ENCODE measurements at regions of chr5 and their contacts with region 1.

Region 1: DNA sequence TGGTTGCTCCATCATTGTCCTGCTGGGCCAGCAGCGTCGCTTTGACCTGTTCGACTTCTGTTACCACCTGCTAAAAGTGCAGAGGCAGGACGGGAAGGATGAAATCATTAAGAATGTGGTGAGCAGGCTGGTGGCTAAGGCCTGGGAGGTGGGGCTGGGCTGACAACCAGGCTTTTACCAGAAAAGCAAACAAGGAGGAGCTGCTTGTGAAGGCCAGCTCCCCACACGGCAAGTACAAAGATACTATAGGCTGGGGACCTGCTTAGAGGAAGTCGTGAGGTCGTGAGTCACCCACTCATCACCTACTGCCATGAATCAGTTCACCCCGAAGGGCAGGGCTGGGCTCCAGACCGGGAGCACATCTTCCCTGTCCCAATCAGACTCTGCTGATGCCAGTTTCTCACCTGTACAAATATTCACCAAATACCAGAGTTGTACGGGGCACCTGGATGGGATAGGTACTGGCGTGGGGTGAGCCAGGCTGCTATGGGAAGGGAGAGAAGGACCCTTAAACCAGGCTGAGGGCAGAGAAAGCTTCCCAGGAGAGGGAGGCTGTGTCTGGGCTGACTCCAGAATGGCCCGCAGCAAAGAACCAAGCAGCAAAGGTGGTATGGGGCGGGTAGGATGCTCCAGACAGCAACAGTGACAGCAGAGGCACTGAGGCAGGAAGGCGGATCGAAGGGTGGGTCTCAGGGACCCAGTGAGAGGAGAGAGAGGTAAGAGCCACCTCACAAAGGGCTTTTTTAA is 69.3 kb upstream of the NIPAL4 start:
- DNase-seq: peak; percentile 93 to 100
- H3K4me3 ChIP-seq: no peak overlapping the region
- H3K27ac ChIP-seq: peak overlapping the region; percentile 79
- H3K4me1 ChIP-seq: peaks cover 44% of the 10 kb centered on the region
- H3K27me3 ChIP-seq: no peaks in the 10 kb centered on the region
- CTCF ChIP-seq: no peak

Region 2: DNA sequence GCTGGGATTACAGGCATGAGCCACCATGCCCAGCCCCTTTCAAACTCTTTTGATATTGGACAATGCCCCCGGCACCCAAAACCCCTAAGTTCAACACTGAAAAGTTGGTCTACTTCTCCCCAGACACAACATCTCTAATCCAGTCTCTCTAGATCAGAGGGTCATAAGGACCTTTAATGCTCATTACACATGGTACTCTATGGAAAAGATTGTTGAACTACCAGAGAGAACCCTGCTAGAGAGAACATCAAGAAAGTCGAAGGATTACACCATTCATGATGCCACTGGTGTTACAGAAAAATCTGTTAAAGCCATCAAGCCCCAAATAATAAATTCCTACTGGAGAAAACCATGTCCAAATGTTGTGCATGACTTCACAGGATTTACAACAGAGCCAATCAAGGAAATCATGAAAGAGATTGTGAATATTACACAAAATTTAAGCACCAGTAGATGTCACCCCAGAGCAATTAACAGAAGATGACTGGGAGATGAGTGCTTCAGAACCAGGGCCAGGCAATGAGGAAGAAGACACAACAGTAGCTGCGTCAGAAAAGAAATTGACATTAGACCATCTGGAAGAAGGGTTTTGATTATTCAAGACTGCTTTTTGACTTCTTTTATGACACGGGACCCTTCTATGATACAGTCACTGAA is 40.9 kb after region 1 on chr5:
- CTCF ChIA-PET with region 1: no interaction called
- POLR2A ChIA-PET with region 1: no interaction called
- intact Hi-C with region 1: loop called (anchors 5 kb)
- DNase-seq: no peak
- H3K4me3 ChIP-seq: no peak overlapping the region
- H3K27ac ChIP-seq: no peak overlapping the region
- H3K4me1 ChIP-seq: no peaks in the 10 kb centered on the region
- H3K27me3 ChIP-seq: no peaks in the 10 kb centered on the region
- CTCF ChIP-seq: peak; percentile 63

Region 3: GRCh38 chr5:157464519-157465171 is 73.9 kb after region 1 on chr5:
- CTCF ChIA-PET with region 1: no interaction called
- POLR2A ChIA-PET with region 1: no interaction called
- intact Hi-C with region 1: loop called (anchors 5 kb)
- DNase-seq: peak; percentile 59 to 81
- H3K4me3 ChIP-seq: no peak overlapping the region
- H3K27ac ChIP-seq: 0 out of 2 replicates have a peak overlapping the region, but pooled peaks have one; percentile 13
- H3K4me1 ChIP-seq: peaks cover 17% of the 10 kb centered on the region
- H3K27me3 ChIP-seq: no peaks in the 10 kb centered on the region
- CTCF ChIP-seq: no peak

Region 4: GRCh38 chr5:157505496-157505895 is 114.8 kb after region 1 on chr5:
- CTCF ChIA-PET with region 1: interaction called, 3 read pairs
- POLR2A ChIA-PET with region 1: interaction called, 10 read pairs
- intact Hi-C with region 1: loop called (anchors 2 kb)
- DNase-seq: no peak
- H3K4me3 ChIP-seq: no peak overlapping the region
- H3K27ac ChIP-seq: no peak overlapping the region
- H3K4me1 ChIP-seq: peaks cover 6% of the 10 kb centered on the region; the same call in 1 of the 2 replicates
- H3K27me3 ChIP-seq: no peaks in the 10 kb centered on the region
- CTCF ChIP-seq: no peak

Region 5: GRCh38 chr5:157511651-157512644 is 121.2 kb after region 1 on chr5:
- CTCF ChIA-PET with region 1: interaction called, 3 read pairs
- POLR2A ChIA-PET with region 1: no interaction called
- intact Hi-C with region 1: loop called (anchors 2 kb)
- DNase-seq: peak; percentile 85 to 87
- H3K4me3 ChIP-seq: no peak overlapping the region
- H3K27ac ChIP-seq: peak overlapping the region; percentile 96
- H3K4me1 ChIP-seq: peaks cover 40% of the 10 kb centered on the region
- H3K27me3 ChIP-seq: no peaks in the 10 kb centered on the region
- CTCF ChIP-seq: no peak

Region 6: DNA sequence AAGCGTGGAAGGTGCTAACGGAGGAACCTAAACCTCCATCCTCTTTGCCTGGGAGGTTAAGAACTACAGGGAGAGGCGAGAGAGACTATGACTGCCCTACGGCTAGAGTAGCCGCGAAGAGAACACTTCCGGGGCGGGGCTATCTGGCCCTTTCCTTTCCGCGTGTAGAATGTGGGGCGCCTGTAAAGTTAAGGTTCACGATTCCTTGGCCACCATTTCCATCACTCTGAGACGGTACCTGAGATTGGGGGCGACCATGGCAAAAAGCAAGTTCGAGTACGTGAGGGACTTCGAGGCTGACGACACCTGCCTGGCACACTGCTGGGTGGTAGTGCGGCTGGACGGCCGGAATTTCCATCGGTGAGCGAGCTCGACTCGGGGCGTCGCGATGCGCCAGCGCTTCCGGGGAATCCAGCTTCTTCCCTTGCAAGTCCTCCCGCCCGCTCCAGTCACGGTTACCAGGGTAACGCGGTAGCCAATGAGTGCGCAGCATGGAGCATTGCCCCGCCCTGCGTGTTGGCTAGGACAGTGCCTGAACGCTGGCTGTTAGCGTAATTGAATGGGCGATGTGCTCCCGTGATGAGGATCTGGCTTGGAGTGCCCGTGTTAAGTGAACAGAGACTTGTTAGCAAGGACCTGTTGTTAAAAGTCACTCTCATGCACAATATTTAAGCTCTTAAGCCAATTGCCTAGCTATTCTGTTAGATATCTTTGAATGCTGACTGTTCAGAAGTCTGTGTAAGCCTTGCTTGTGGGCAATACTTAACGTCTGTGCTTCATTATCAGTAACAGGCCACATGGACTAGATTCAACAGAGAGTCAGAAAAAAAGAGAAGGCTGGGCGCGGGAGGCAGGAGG is 340.8 kb after region 1 on chr5 and contains the start of gene THG1L:
- CTCF ChIA-PET with region 1: interaction called, 11 read pairs
- POLR2A ChIA-PET with region 1: no interaction called
- intact Hi-C with region 1: loop called (anchors 1 kb)
- DNase-seq: peak; percentile 94 to 98
- H3K4me3 ChIP-seq: peak within 1 kb of the TSS; percentile 69
- H3K27ac ChIP-seq: peak within 1 kb of the TSS; percentile 80
- H3K4me1 ChIP-seq: 0 out of 2 replicates have a peak, but pooled peaks cover 4% of the 10 kb centered on the region
- H3K27me3 ChIP-seq: no peaks in the 10 kb centered on the region
- CTCF ChIP-seq: no peak
- total RNA-seq, gene THG1L: 20.9 and 25.3 TPM in 2 replicates